ENCODE measurements at regions of chr17 and their contacts with region 1.

Region 1: DNA sequence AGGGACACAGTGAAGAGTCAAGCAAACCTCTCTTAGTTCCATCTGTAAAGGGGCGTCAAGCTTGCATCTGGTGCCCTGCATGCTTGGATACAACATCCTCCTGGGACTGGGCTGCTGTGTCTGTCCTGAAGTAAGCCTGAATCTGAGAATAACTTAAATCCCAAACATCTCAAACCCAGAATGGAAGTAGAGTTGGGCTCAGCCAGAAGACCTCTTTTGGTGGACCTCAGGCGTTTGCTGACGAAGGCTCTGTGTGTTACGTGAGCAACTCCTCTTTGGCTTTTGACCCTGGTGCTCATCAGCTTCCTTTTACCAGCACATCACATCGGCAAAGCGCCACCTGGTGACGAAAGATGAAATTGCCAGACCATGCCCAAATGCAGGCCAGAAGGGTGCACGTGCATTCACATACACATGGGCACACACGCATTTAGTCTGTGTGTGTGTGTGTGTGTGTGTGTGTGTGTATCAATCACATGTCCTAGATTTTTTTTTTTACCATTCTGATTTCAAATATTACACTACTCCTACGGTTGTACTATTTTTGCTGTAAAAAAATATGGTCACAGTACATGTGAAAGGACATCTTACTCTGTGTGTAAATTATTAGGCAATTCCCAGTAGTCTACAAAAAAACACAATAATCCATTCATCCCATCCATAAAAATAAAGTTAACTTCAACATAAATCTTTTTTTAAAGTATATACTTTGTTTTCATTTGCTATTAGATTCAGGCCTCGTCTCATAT is 41.1 kb upstream of the FOXJ1 start:
- DNase-seq: peak; percentile 98
- H3K4me3 ChIP-seq: no peak overlapping the region
- H3K27ac ChIP-seq: no peak overlapping the region
- H3K4me1 ChIP-seq: peaks cover 0 to 8% (median 6%) of the 10 kb centered on the region in 4 donors
- H3K27me3 ChIP-seq: no peaks in the 10 kb centered on the region
- CTCF ChIP-seq: peak; percentile 82 to 91 (median 90)
- EP300 ChIP-seq: no peak
- POLR2A ChIP-seq: no peak

Region 2: DNA sequence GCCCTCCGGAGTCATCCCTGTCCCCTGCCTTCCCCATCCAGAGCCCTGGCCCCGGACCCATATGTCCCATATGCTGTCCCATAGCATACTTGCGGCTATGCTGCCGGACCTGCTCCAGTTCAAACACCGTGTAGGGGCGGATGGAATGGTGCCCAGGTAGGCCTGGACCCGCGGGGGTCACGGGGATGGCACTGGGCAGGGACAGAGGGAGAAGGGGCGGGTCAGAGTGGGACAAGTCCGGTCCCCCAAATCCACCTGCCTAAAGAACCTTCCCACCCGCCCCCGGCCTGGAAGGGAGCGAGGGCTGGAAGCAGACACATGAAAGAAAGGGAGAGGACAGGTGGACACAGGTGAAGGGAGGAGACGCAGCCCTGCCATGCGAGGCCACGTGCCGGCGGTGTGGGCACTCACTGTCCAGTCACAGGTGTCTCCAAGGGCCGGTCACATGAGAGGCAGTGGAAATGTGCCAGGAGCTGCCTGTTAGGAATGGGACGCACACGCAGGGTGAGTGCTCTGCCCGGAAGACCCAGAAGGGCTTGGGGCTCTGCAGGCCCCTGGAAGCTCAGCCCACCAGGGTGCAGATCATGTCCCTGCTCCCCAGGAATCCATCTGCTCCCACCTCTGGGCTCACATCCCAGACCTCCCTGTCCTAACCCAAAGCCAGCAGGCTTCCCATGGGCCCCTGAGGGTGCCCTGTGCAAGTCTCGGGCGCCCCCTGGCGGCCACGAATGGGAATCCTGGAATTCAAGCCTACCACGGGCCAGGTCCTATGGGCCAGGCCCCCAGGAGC is 97.0 kb after region 1 on chr17:
- intact Hi-C with region 1: loop called (anchors 5 kb)
- DNase-seq: peak; percentile 96
- H3K4me3 ChIP-seq: no peak overlapping the region
- H3K27ac ChIP-seq: no peak overlapping the region
- H3K4me1 ChIP-seq: peaks cover 8 to 18% (median 13%) of the 10 kb centered on the region in 4 donors
- H3K27me3 ChIP-seq: no peaks in the 10 kb centered on the region
- CTCF ChIP-seq: peak; percentile 96 to 98 (median 97)
- EP300 ChIP-seq: no peak
- POLR2A ChIP-seq: no peak

Region 3: DNA sequence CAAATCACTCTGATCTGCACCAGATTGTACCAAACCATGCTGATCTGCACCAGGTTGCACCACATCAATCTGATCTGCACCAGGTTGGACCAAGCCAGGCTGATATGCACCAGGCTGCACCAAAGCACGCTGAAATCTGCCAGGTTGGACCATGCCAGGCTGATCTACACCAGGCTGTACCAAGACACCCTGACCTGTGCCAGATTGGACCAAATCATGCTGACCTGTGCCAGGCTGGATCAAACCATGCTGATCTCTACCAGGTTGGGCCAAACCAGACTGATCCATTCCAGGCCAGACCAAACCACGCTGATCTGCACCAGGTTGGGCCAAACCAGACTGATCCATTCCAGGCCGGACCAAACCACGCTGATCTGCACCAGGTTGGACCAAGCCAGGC is 110.4 kb after region 1 on chr17:
- intact Hi-C with region 1: no loop called
- DNase-seq: no peak
- H3K4me3 ChIP-seq: no peak overlapping the region
- H3K27ac ChIP-seq: no peak overlapping the region
- H3K4me1 ChIP-seq: peaks cover 0 to 7% (median 2%) of the 10 kb centered on the region in 4 donors
- H3K27me3 ChIP-seq: no peaks in the 10 kb centered on the region
- CTCF ChIP-seq: no peak
- EP300 ChIP-seq: no peak
- POLR2A ChIP-seq: no peak

Measured in esophagus muscularis mucosa (tissue), 4 donors.